ENCODE measurements at regions of chr18 and their contacts with region 1.

Region 1: GRCh38 chr18:23828426-23828825 is 139.2 kb downstream of the LAMA3 start:
- DNase-seq: peak; percentile 71
- H3K4me3 ChIP-seq: no peak overlapping the region
- H3K27ac ChIP-seq: no peak overlapping the region; the same call in 1 of the 2 replicates
- H3K4me1 ChIP-seq: peaks cover 36% of the 10 kb centered on the region
- H3K27me3 ChIP-seq: no peaks in the 10 kb centered on the region

Region 2: DNA sequence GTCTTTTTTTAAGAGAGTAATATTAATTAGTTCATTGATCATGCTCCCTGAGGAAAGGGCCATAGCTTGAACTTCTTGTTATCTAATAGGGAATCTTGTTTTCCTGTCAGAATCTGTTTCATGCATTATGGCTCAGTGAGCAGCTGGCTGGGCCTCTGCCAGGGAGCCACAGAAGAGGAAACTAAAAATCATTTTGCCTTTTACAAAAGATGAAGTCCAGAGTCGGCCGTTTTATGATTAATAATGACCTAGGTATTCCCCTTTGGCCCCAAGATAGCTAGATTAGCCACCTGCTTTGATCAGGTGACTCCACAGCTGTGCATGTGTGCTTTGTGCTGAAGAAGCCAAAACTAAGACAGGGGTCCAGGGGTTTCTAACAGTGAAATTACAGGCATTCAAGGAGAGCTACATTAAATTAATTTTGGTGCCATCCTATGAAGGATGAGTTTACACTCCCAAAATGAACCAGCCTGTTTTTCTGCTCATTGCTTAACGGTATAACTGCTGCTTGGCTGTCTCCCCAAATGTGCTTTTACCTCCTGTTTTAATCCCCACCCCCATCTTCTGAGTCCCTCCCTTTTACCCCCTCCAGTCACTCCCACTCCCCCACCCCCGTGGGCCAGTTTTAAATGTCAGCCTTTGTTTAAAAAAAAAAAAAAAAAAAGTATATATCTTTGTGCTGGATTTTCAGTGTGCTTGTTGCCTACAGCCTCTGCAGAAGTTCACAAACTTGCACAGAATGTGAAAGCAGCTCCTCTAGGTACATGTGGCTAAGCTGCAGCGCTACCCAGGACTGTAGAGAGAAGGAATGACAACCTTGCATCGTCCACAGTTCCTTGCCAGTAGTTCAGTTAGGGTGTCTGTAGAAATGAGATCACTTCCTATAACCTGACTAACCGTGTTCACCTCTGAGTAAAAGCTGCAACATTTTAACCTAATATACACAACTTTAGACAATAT is 600.0 kb before region 1 on chr18:
- in situ Hi-C with region 1: no loop called
- DNase-seq: peak; percentile 68
- H3K4me3 ChIP-seq: no peak overlapping the region
- H3K27ac ChIP-seq: peak overlapping the region; percentile 97
- H3K4me1 ChIP-seq: peaks cover 75% of the 10 kb centered on the region
- H3K27me3 ChIP-seq: no peaks in the 10 kb centered on the region

Region 3: DNA sequence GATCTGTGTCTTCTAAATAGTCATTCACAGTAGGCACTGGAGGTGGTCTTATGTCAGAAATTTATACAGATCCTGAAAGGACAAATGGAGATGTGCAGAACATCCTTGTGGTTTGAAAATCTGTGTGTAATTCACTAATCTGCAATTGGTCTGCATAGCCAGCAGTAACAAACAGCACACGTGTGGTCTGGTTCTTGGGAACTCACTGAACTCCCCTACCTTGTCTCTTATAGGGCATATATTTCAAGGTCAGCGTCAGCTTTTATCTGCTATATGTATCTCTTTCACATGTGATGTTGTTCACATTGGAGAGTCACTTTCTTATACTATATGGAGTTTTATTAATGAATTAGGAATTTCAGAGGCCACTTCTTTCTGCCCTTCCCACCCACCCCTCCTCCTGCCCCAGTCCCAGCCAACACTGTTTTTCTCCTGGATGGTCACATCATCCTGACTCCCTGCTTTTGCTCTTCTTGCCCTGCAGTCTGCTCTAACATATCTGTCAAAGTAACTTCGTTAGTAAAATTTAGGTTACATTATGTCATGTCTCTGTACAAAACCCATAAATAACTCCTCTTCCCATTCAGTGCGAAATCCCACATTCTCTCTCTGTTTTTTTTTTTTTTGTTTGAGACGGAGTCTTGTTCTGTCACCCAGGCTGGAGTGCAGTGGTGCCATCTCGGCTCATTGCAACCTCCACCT is 275.0 kb after region 1 on chr18:
- in situ Hi-C with region 1: loop called (anchors 10 kb)
- DNase-seq: no peak
- H3K4me3 ChIP-seq: no peak overlapping the region
- H3K27ac ChIP-seq: no peak overlapping the region
- H3K4me1 ChIP-seq: no peaks in the 10 kb centered on the region
- H3K27me3 ChIP-seq: no peaks in the 10 kb centered on the region